Brain microvascular endothelial cell (primary cell): ENCODE measurements at regions of chr14 and their contacts with region 1.

Region 1: GRCh38 chr14:56491299-56492285 is 88.0 kb upstream of the TMEM260 start:
- DNase-seq: peak; percentile 65
- H3K4me3 ChIP-seq: no peak overlapping the region
- H3K27ac ChIP-seq: no peak overlapping the region
- H3K27me3 ChIP-seq: no peaks in the 10 kb centered on the region
- CTCF ChIP-seq: peak; percentile 83

Region 2: GRCh38 chr14:55446218-55446654 is 1045.4 kb before region 1 on chr14:
- in situ Hi-C with region 1: loop called (anchors 25 kb)
- DNase-seq: peak; percentile 76
- H3K4me3 ChIP-seq: no peak overlapping the region
- H3K27ac ChIP-seq: peak overlapping the region; percentile 87
- H3K27me3 ChIP-seq: no peaks in the 10 kb centered on the region
- CTCF ChIP-seq: peak; percentile 77

Region 3: GRCh38 chr14:57712102-57712501 is 1220.5 kb after region 1 on chr14:
- in situ Hi-C with region 1: no loop called
- DNase-seq: no peak
- H3K4me3 ChIP-seq: no peak overlapping the region
- H3K27ac ChIP-seq: no peak overlapping the region
- H3K27me3 ChIP-seq: no peaks in the 10 kb centered on the region
- CTCF ChIP-seq: no peak